ENCODE measurements at regions of chr12 and their contacts with region 1.

Region 1: DNA sequence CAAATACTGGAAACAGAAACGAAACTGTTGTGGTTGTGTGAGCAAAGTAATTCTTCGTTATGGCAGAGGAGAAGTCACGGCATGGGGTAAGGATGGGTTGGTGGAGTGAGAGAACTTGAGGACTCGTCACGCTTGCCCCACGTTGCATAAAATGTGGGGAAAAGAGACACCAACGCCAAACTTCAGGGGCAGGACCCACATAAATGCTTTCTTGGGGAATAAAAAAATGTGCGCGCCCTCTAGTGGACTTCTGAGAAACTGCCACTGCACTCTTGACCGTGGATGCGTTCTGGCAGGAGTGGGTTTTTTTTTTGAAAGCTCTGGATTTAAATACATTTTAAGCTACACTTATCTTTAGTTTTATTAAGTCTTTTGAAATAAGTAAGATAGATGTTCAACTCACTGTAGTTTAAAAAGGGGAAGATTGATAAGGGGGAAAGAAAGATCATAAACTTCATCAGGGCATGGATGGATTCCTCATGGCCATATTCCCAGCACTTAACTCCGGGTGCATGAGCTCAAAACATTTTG is 4.1 kb upstream of the IGF1 start:
- DNase-seq: peak; percentile 46
- CTCF ChIP-seq: peak; percentile 70

Region 2: DNA sequence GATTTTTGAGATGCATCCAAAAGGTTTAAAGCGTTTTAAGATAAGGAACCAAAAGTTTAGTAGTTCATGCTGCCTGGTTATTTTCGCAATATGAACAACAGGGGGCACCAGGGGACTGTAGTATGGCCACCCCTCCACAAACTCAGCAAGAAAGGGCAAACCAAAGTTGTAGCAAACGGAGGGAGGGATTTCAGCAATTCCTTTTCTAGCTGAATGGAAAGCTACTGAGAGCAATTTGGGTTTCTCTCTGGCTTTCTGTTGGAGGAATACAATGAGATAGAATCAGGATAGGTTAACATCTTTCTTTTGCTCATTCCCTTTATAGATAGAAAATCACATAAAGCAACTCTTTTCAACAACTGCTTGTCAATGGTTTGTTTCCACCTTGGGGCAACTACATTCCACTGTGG is 544.6 kb before region 1 on chr12:
- in situ Hi-C with region 1: loop called (anchors 10 kb)
- DNase-seq: no peak
- CTCF ChIP-seq: peak; percentile 80